Dendritic cell treated with granulocyte-macrophage colony-stimulating factor and Interleukin-4, amounts not matched to agents 40 ng/mL and 50 ng/mL, for 4 days (primary cell): ENCODE measurements at regions of chr7 and their contacts with region 1.

Region 1: DNA sequence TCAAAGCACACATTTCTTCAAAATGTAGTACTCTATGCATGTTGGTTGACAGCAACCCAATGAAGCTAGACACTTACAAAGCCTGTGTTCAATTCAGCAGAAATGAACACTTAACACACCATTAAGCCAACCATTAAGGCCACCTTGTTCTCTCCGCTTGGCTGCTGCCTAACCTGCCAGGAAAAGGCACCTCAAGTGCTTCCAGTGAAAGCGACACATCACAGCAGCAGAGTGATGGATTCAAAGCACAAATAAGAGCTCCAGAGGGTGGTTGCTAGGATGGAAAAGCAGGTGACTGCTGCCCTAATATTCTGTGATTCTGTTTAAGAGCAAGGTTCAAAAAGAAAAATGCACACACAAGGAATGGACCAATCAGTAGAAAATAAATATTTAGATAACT is 81.5 kb upstream of the GNAI1 start:
- H3K4me3 Mint-ChIP-seq: no peak overlapping the region
- H3K27ac Mint-ChIP-seq: no peak overlapping the region
- H3K4me1 Mint-ChIP-seq: no peaks in the 10 kb centered on the region
- H3K27me3 Mint-ChIP-seq: no peaks in the 10 kb centered on the region

Region 2: GRCh38 chr7:80453699-80454340 is 400.7 kb after region 1 on chr7:
- intact Hi-C with region 1: loop called (anchors 10 kb)
- H3K4me3 Mint-ChIP-seq: no peak overlapping the region
- H3K27ac Mint-ChIP-seq: no peak overlapping the region
- H3K4me1 Mint-ChIP-seq: peaks cover 10% of the 10 kb centered on the region
- H3K27me3 Mint-ChIP-seq: no peaks in the 10 kb centered on the region